H1 (cell line): ENCODE measurements at regions of chr10 and their contacts with region 1.

Region 1: GRCh38 chr10:77251297-77252013 is 386.2 kb downstream of the KCNMA1 start:
- DNase-seq: no peak
- H3K4me3 ChIP-seq: no peak overlapping the region
- H3K27ac ChIP-seq: no peak overlapping the region
- H3K4me1 ChIP-seq: no peaks in the 10 kb centered on the region
- H3K27me3 ChIP-seq: no peaks in the 10 kb centered on the region; a peak in 1 of 7 replicates
- CTCF ChIP-seq: peak; percentile 73 to 87 (median 75)
- EP300 ChIP-seq: no peak
- POLR2A ChIP-seq: no peak
- RAD21 ChIP-seq: peak; percentile 88 to 91

Region 2: GRCh38 chr10:77207828-77208185 is 43.6 kb before region 1 on chr10:
- CTCF ChIA-PET with region 1: no interaction called
- POLR2A ChIA-PET with region 1: no interaction called
- DNase-seq: no peak
- H3K4me3 ChIP-seq: no peak overlapping the region
- H3K27ac ChIP-seq: no peak overlapping the region
- H3K4me1 ChIP-seq: 0 out of 7 replicates have a peak, but pooled peaks cover 0 to 2% (median 0%) of the 10 kb centered on the region in 4 experiments
- H3K27me3 ChIP-seq: no peaks in the 10 kb centered on the region
- CTCF ChIP-seq: no peak
- EP300 ChIP-seq: no peak
- POLR2A ChIP-seq: no peak
- RAD21 ChIP-seq: no peak

Region 3: DNA sequence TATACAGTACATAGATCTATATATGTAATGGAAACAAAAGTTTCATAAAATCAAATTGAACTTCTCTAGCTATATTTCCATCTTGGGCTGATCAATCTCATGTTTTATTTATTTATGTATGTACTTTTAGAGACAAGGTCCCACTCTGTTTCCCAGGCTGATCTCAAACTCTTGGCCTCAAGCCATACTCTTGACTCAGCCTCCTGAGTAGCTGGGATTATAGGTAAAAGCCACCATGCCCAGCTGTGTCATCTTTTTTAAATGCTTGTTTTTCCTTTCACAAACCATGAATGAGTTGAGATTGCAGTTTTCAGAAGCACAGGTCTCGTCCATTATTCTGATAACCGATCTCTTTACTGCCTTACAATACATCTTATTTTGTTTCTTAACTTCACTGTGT is 14.8 kb before region 1 on chr10:
- CTCF ChIA-PET with region 1: interaction called, 13 read pairs
- POLR2A ChIA-PET with region 1: no interaction called
- DNase-seq: no peak
- H3K4me3 ChIP-seq: no peak overlapping the region
- H3K27ac ChIP-seq: no peak overlapping the region
- H3K4me1 ChIP-seq: no peaks in the 10 kb centered on the region
- H3K27me3 ChIP-seq: no peaks in the 10 kb centered on the region
- CTCF ChIP-seq: no peak
- EP300 ChIP-seq: no peak
- POLR2A ChIP-seq: no peak
- RAD21 ChIP-seq: no peak

Region 4: GRCh38 chr10:77377678-77378352 is 126.4 kb after region 1 on chr10:
- CTCF ChIA-PET with region 1: interaction called, 10 read pairs
- POLR2A ChIA-PET with region 1: no interaction called
- DNase-seq: no peak
- H3K4me3 ChIP-seq: no peak overlapping the region
- H3K27ac ChIP-seq: no peak overlapping the region
- H3K4me1 ChIP-seq: no peaks in the 10 kb centered on the region
- H3K27me3 ChIP-seq: no peaks in the 10 kb centered on the region
- CTCF ChIP-seq: peak; percentile 42 to 56 (median 44)
- EP300 ChIP-seq: no peak
- POLR2A ChIP-seq: no peak
- RAD21 ChIP-seq: peak; percentile 81 to 85